Activated T-helper 1 cell treated with anti-CD3 and anti-CD28 coated beads, Interleukin-12 subunit alpha, Interleukin-12 subunit beta, Interleukin-2, Interleukin-4 antibody, amounts not matched to agents 30 ng/mL and 10 ng/mL and 1 ng/mL, durations not matched to agents 14 hours and 24 hours and 36 hours (primary cell): ENCODE measurements at regions of chr13 and their contacts with region 1.

Region 1: DNA sequence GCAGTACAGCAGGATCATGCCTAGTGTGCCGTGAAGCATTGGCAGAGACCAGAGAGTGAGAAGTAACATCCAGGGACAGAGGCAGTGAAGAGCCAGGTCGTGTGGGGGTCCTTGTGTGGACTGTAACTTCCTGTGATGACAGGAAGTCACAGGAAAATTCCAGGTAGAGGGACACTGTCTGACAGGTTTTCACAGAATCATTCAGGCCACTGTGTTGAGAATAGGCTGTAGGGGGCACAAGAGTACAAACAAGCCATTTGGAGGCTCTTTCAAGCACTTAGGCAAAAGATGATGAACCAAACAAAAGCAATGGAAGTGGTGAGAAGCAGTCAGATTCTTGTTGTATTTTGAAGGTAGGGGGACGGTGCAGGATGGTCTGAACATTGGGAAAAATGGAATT is 46.4 kb downstream of the N4BP2L1 start:
- DNase-seq: peak; percentile 9
- H3K4me3 Mint-ChIP-seq: no peak overlapping the region
- H3K27ac Mint-ChIP-seq: no peak overlapping the region
- H3K4me1 Mint-ChIP-seq: no peaks in the 10 kb centered on the region
- H3K27me3 Mint-ChIP-seq: no peaks in the 10 kb centered on the region

Region 2: DNA sequence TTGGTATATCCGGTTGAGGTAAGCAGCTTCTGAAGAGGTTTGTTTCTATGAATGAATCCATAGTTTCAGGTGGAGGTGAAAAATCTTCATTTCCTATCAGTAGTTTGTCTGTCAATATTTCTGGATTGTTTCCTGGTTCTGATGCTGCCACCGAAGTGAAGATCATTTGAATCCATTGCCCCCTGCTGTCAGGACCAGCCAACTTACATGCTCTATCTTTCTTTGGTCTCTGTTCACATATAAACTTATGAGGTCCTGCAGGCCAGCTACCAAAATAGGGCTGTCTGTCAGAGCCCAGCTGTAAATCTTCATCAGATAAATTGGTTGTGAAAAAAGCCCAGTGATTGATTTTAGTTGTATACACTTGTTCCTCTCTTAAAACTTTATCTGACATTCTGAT is 61.6 kb after region 1 on chr13:
- intact Hi-C with region 1: loop called (anchors 1 kb)
- DNase-seq: no peak
- H3K4me3 Mint-ChIP-seq: no peak overlapping the region
- H3K27ac Mint-ChIP-seq: no peak overlapping the region
- H3K4me1 Mint-ChIP-seq: peaks cover 16% of the 10 kb centered on the region
- H3K27me3 Mint-ChIP-seq: no peaks in the 10 kb centered on the region

Region 3: DNA sequence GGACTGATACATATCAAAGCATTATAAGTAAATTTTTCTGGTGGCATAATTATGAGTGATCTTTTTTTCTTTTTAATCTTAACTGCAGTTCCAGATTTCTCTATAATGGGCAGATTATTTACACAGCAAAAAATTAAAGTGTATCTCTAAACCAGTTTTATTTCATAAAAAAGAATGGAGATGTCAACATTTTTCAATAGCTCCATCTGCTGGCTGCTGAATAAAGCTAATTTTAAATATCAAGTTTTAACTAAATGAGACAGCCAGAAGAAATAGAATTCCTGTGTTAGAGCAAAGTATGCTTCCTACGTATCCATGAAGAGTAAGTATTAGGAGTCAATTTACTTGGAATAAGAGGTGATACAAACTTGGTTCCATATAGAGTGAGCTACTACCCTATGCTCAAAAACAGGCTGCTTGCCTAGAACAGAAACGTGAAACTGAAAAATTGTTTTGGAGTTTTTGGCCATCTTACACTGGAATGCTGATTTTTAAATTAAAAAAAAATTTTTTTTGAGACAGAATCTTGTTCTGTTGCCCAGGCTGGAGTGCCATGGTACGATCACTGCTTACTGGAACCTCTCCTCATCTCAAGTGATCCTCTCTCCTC is 199.7 kb after region 1 on chr13:
- intact Hi-C with region 1: loop called (anchors 1 kb)
- DNase-seq: no peak
- H3K4me3 Mint-ChIP-seq: no peak overlapping the region
- H3K27ac Mint-ChIP-seq: no peak overlapping the region
- H3K4me1 Mint-ChIP-seq: peaks cover 12% of the 10 kb centered on the region
- H3K27me3 Mint-ChIP-seq: peaks cover 19% of the 10 kb centered on the region